ENCODE measurements at regions of chr18 and their contacts with region 1.

Region 1: GRCh38 chr18:59646228-59646962 is 50.8 kb downstream of the CCBE1 start:
- DNase-seq: no peak
- H3K4me3 ChIP-seq: no peak overlapping the region
- H3K27ac ChIP-seq: no peak overlapping the region
- H3K4me1 ChIP-seq: no peaks in the 10 kb centered on the region
- H3K27me3 ChIP-seq: no peaks in the 10 kb centered on the region
- CTCF ChIP-seq: no peak
- POLR2A ChIP-seq: no peak

Region 2: GRCh38 chr18:59402432-59403090 is 243.8 kb before region 1 on chr18:
- CTCF ChIA-PET with region 1: no interaction called
- POLR2A ChIA-PET with region 1: no interaction called
- dilution Hi-C with region 1: no loop called
- intact Hi-C with region 1: no loop called
- DNase-seq: peak; percentile 73
- H3K4me3 ChIP-seq: no peak overlapping the region
- H3K27ac ChIP-seq: no peak overlapping the region
- H3K4me1 ChIP-seq: no peaks in the 10 kb centered on the region
- H3K27me3 ChIP-seq: peaks cover 0 to 1% of the 10 kb centered on the region in 2 experiments
- CTCF ChIP-seq: peak; percentile 84 to 92
- POLR2A ChIP-seq: no peak

Region 3: GRCh38 chr18:59660786-59661743 is 14.7 kb after region 1 on chr18:
- CTCF ChIA-PET with region 1: interaction called, 10 read pairs
- POLR2A ChIA-PET with region 1: no interaction called
- dilution Hi-C with region 1: no loop called
- intact Hi-C with region 1: no loop called
- DNase-seq: no peak
- H3K4me3 ChIP-seq: no peak overlapping the region
- H3K27ac ChIP-seq: no peak overlapping the region
- H3K4me1 ChIP-seq: no peaks in the 10 kb centered on the region
- H3K27me3 ChIP-seq: no peaks in the 10 kb centered on the region
- CTCF ChIP-seq: no peak
- POLR2A ChIP-seq: no peak

Measured in endothelial cell of umbilical vein (primary cell).